GM10248 (cell line): ENCODE measurements at regions of chr11 and their contacts with region 1.

Region 1: DNA sequence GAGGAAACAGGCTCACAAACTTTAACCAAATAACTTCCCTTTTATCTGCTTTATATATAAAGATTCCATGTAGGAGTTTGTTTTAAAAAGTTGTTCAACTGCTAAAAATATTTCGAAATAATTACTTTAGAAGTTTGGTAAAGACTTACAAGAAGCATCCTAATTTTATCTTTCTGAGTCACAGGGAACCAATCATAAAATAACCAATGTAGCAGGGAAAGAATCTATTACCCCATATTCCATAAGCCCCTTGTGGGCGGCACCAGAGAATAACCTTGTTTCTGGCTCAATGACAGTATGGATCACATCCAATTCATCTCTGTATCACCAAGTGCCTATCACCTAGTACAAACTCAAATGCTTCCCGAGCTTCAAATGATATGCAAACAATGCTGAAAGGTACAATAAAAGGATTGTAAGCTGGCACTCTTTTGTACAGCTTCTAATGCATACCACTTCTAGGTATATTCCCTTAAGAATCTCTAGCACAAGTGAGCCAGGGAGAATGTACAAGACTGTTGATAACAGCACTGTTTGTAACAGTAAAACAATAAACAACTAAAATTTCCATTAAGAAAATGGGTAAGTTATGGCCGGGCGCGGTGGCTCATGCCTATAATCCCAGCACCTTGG is 158.4 kb downstream of the ATG16L2 start:
- DNase-seq: no peak
- CTCF ChIP-seq: no peak

Region 2: DNA sequence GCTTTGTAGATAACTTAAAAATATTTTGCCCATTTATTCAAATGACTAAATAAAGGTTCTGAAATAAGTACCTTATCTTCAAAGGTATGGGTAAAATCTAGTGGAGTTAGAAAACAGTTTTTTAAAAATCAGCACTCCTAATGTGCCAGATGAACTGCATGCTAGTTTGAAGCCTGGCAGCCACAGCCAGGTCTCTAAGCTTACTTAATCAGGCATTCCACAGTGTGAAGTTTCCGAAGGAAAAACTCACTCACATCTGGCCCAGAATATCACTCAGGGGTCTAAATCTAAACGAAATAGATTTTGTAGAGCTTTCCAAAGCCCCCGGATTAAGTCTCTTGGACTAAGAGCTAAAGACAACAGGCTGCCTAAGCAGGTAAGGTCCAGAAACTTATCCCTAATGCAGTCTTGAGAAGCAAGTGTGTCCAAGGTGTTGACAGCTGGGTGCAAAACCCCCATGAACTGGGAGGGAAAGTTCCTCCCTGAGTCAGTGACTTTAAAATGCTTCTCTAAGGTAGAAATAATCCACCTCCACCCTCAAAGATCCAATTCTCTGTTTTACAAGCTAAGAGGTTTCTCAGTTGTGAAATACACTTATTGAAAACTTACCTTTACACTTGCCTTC is 12.0 kb after region 1 on chr11:
- CTCF ChIA-PET with region 1: interaction called, 13 read pairs
- POLR2A ChIA-PET with region 1: no interaction called
- DNase-seq: no peak
- CTCF ChIP-seq: no peak